Sigmoid colon (tissue), 7 donors: ENCODE measurements at regions of chr3 and their contacts with region 1.

Region 1: GRCh38 chr3:148955544-148956346 is 35.6 kb upstream of the GYG1 start:
- DNase-seq: peak; percentile 90
- H3K4me3 ChIP-seq: no peak overlapping the region
- H3K27ac ChIP-seq: peak overlapping the region; percentile 79 to 94 (median 92)
- H3K4me1 ChIP-seq: peaks cover 0 to 55% (median 35%) of the 10 kb centered on the region in 4 donors
- H3K27me3 ChIP-seq: no peaks in the 10 kb centered on the region
- CTCF ChIP-seq: peak; percentile 42 to 63 (median 50)
- EP300 ChIP-seq: peak in 3 of 4 donors; percentile 36 to 44 (median 37)
- POLR2A ChIP-seq: peak in 1 of 2 donors; percentile 37

Region 2: DNA sequence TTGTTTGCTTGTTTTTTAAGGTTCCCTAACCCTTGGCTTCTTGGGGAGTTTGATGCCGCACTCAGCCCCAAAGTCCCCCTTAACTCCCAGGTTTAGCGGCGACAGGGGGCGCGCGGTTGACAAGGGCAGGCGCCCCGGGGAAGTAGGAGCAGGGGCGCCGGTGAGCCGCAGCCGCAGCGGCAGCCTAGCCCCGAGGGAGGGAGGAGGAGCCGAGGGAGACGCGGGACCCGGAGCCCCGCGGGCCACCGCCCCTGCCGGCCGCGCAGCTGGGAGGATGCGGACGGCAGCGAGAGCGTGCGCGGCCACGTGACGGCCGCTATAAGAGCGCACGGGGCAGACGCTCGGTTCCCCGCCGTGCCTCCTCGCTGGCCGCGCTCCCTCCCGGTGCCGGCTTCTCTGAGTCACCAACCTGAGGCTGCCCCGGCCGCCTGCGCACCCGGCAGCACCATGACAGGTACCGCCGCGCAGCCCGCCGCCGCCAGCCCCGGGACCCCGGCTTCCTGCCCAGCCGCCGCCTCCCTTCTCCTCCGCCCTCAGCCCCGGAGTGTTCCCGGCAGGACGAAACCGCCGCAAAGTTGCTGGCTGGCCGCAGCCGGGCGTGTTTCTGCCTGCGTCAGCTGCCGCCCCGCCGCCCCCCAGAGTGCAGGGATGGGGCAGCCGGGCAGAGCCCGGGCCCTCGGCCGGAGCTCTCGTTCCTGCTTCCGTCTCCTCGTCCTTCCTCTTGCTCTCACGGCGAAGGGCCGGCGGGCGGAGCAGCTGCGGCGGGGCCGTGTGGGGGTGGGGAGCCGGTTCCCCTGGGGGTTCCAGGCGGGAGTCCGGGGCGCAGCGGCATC is 35.7 kb after region 1 on chr3 and contains the start of gene GYG1:
- intact Hi-C with region 1: loop called (anchors 2 kb)
- DNase-seq: peak; percentile 93
- H3K4me3 ChIP-seq: peak within 1 kb of the TSS; percentile 92 to 99 (median 94)
- H3K27ac ChIP-seq: peak within 1 kb of the TSS; percentile 98 to 99 (median 98)
- H3K4me1 ChIP-seq: peaks cover 0 to 29% (median 28%) of the 10 kb centered on the region in 4 donors
- H3K27me3 ChIP-seq: no peaks in the 10 kb centered on the region
- CTCF ChIP-seq: peak in 2 of 4 experiments; percentile 19 to 36
- EP300 ChIP-seq: no peak
- POLR2A ChIP-seq: peak; percentile 58 to 76
- total RNA-seq, gene GYG1: 142 to 213 (median 186) TPM

Region 3: GRCh38 chr3:149086232-149086988 is 130.7 kb after region 1 on chr3 and contains the start of gene HLTF:
- intact Hi-C with region 1: loop called (anchors 2 kb)
- DNase-seq: peak; percentile 97
- H3K4me3 ChIP-seq: peak within 1 kb of the TSS; percentile 55 to 86 (median 68)
- H3K27ac ChIP-seq: peak within 1 kb of the TSS; percentile 79 to 91 (median 80)
- H3K4me1 ChIP-seq: peaks cover 0 to 18% (median 13%) of the 10 kb centered on the region in 4 donors
- H3K27me3 ChIP-seq: no peaks in the 10 kb centered on the region
- CTCF ChIP-seq: no peak
- EP300 ChIP-seq: no peak
- POLR2A ChIP-seq: peak; percentile 37 to 66
- total RNA-seq, gene HLTF: 24.4 to 43.9 (median 29.9) TPM

Region 4: GRCh38 chr3:149273096-149273751 is 317.5 kb after region 1 on chr3:
- intact Hi-C with region 1: loop called (anchors 1 kb)
- DNase-seq: no peak
- H3K4me3 ChIP-seq: no peak overlapping the region
- H3K27ac ChIP-seq: peak overlapping the region in 1 of 4 donors; percentile 13
- H3K4me1 ChIP-seq: peaks cover 0 to 15% (median 3%) of the 10 kb centered on the region in 4 donors
- H3K27me3 ChIP-seq: no peaks in the 10 kb centered on the region
- CTCF ChIP-seq: peak; percentile 86 to 93 (median 88)
- EP300 ChIP-seq: no peak
- POLR2A ChIP-seq: no peak

Region 5: GRCh38 chr3:149657926-149658733 is 702.4 kb after region 1 on chr3 and contains the start of gene WWTR1:
- intact Hi-C with region 1: loop called (anchors 10 kb)
- DNase-seq: peak; percentile 99
- H3K4me3 ChIP-seq: peak within 1 kb of the TSS; percentile 57 to 81 (median 72)
- H3K27ac ChIP-seq: peak within 1 kb of the TSS; percentile 93 to 99 (median 98)
- H3K4me1 ChIP-seq: peaks cover 0 to 56% (median 50%) of the 10 kb centered on the region in 4 donors
- H3K27me3 ChIP-seq: no peaks in the 10 kb centered on the region
- CTCF ChIP-seq: no peak
- EP300 ChIP-seq: peak; percentile 62 to 90 (median 74)
- POLR2A ChIP-seq: peak; percentile 91 to 97
- total RNA-seq, gene WWTR1: 243 to 340 (median 317) TPM